CD4-positive, alpha-beta T cell (primary cell): ENCODE measurements at regions of chr15 and their contacts with region 1.

Region 1: GRCh38 chr15:51516291-51516690 is 106.3 kb downstream of the DMXL2 start:
- DNase-seq: no peak
- ATAC-seq: no peak
- H3K4me3 ChIP-seq: no peak overlapping the region
- H3K4me3 Mint-ChIP-seq: no peak overlapping the region
- H3K27ac ChIP-seq: no peak overlapping the region
- H3K27ac Mint-ChIP-seq: no peak overlapping the region
- H3K4me1 ChIP-seq: no peaks in the 10 kb centered on the region
- H3K4me1 Mint-ChIP-seq: no peaks in the 10 kb centered on the region
- H3K27me3 ChIP-seq: no peaks in the 10 kb centered on the region
- H3K27me3 Mint-ChIP-seq: no peaks in the 10 kb centered on the region
- CTCF ChIP-seq: no peak

Region 2: GRCh38 chr15:51533672-51534398 is 17.5 kb after region 1 on chr15:
- CTCF ChIA-PET with region 1: interaction called, 3 read pairs
- POLR2A ChIA-PET with region 1: no interaction called
- intact Hi-C with region 1: loop called in 1 of 2 experiments (anchors 2 kb)
- DNase-seq: no peak
- ATAC-seq: no peak
- H3K4me3 ChIP-seq: no peak overlapping the region
- H3K4me3 Mint-ChIP-seq: no peak overlapping the region
- H3K27ac ChIP-seq: no peak overlapping the region
- H3K27ac Mint-ChIP-seq: no peak overlapping the region
- H3K4me1 ChIP-seq: no peaks in the 10 kb centered on the region
- H3K4me1 Mint-ChIP-seq: no peaks in the 10 kb centered on the region
- H3K27me3 ChIP-seq: no peaks in the 10 kb centered on the region
- H3K27me3 Mint-ChIP-seq: no peaks in the 10 kb centered on the region
- CTCF ChIP-seq: no peak